Psoas muscle (tissue), 8 donors: ENCODE measurements at regions of chr20 and their contacts with region 1.

Region 1: GRCh38 chr20:17995967-17996819 is 27.4 kb downstream of the MGME1 start:
- DNase-seq: no peak
- ATAC-seq: peak; percentile 70 to 88 (median 75)
- H3K4me3 ChIP-seq: no peak overlapping the region
- H3K27ac ChIP-seq: no peak overlapping the region
- H3K4me1 ChIP-seq: no peaks in the 10 kb centered on the region
- H3K27me3 ChIP-seq: no peaks in the 10 kb centered on the region
- CTCF ChIP-seq: peak; percentile 96

Region 2: DNA sequence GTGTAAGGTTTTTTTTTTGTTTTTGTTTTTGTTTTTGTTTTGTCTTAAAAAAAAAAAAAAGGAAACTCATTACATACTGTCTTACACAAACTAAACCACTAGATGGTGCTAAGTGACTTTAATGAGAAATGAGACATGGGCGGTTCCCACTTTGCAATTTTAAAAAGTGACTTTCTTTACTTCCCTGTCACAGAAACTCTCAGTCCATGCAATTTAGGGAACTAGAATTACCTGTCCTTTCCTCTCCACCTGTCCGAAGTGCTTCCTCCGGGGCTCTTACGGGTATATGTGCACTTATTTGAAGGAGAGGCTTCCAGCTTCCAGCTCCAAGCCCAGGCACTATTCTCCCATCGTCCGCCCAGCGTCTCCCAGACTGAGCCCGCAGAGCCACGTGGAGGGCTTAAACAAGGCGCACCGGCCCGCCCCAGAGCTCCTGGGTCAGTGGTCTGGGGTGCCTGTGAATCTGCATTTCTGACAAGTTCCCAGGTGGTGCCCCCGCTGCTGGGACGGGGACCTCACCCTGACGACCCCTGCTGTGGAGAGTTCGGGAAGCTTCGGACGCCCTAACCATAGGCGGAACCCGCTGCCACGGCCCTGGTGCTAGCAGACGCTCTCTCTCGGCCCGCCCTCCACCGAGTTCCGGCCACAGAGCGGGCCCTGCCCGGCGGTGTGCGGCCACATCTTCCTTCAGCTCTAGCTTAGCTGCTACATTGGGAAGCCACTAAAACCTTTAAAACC is 491.1 kb before region 1 on chr20:
- intact Hi-C with region 1: loop called (anchors 2 to 10 kb)
- DNase-seq: peak; percentile 49 to 68
- ATAC-seq: peak; percentile 68 to 89 (median 74)
- H3K4me3 ChIP-seq: peak overlapping the region; percentile 63
- H3K27ac ChIP-seq: no peak overlapping the region
- H3K4me1 ChIP-seq: no peaks in the 10 kb centered on the region
- H3K27me3 ChIP-seq: no peaks in the 10 kb centered on the region
- CTCF ChIP-seq: peak; percentile 74

Region 3: DNA sequence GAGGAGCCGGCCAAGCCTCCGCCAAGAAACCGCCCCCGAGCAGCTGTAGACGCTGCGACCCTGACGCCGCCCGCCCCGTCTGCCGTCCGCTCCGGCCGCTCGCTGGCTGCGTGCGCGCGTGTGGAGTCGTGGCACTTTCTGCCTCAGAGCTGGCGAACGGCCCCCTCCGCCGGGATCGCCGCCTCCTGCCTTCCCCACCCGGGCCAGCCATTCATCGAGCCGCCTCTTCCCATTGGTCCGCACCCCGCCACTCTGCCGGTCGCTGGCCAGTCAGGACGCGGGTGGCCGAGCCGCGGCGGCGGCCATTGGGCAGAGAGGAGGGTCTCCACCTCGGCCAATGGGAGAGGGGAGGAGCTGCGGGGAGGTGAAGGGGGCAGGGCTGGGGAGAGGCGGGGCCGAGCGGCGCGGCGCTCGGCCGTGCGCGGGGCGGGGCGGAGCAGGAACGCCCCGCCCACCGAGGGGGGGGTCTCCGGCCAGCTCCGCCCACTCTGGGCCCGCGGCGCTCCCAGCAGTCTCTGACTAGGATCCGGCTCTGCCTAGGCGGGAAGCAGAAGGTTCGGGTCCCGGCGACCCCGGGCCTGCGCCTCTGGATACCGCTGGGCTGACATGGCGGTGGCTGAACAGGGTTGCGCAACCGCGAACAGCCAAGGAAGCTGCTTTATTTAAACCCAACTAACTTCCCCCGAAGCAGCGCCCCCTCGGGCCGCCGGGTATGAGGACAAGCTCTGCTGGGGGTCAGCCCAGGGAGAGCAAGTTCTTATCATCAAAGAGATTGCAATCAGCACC is 313.9 kb before region 1 on chr20 and contains the start of gene RRBP1:
- intact Hi-C with region 1: loop called (anchors 2 to 5 kb)
- DNase-seq: peak; percentile 99
- ATAC-seq: peak; percentile 95 to 96 (median 96)
- H3K4me3 ChIP-seq: peak within 1 kb of the TSS; percentile 75
- H3K27ac ChIP-seq: peak within 1 kb of the TSS; percentile 81
- H3K4me1 ChIP-seq: peaks cover 11% of the 10 kb centered on the region
- H3K27me3 ChIP-seq: no peaks in the 10 kb centered on the region
- CTCF ChIP-seq: peak; percentile 62
- total RNA-seq, gene RRBP1: 21.1 to 40.8 (median 22.6) TPM

Region 4: DNA sequence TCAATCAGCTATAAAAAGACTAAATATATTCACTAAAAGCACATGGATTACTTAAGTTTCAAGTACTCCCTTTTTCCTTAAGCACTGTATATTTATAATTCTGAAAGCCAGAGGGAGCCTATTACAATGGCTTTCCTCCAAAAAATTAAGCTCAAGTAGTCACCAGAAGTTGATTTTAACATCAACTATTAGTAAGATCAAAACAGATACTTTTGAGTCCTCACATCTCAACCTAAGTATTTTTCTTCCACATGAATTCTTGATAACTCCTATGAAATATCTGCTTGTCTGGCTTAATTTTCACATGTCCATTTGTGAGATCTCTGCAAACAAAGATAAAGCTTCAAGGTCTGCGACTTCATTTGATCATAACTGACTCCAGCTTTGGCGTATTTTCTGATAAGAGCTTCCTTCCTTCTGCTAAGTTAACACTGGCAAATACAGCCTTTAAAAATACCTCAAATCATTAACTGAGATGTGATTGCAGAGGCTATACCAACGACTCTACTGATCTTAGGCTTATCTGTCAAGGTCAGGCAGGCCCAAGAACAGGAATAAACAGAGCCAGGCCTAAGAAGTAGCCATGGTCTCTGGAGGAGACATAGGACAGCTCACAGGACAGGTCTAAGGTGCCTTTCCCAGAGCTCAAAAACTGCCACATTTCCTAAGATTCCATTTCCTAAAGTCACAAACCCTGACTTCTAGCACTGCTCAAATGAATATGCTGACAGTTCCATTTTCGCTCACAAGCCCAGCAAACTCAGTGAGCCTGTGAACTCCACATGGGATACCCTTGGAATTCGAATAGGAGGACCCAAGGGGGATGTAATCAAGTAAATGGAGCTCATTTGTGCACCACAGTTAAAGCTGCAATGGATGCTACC is 37.6 kb before region 1 on chr20:
- intact Hi-C with region 1: loop called (anchors 2 to 5 kb)
- DNase-seq: no peak
- ATAC-seq: no peak
- H3K4me3 ChIP-seq: no peak overlapping the region
- H3K27ac ChIP-seq: peak overlapping the region; percentile 52
- H3K4me1 ChIP-seq: peaks cover 45% of the 10 kb centered on the region
- H3K27me3 ChIP-seq: no peaks in the 10 kb centered on the region
- CTCF ChIP-seq: peak; percentile 25

Region 5: DNA sequence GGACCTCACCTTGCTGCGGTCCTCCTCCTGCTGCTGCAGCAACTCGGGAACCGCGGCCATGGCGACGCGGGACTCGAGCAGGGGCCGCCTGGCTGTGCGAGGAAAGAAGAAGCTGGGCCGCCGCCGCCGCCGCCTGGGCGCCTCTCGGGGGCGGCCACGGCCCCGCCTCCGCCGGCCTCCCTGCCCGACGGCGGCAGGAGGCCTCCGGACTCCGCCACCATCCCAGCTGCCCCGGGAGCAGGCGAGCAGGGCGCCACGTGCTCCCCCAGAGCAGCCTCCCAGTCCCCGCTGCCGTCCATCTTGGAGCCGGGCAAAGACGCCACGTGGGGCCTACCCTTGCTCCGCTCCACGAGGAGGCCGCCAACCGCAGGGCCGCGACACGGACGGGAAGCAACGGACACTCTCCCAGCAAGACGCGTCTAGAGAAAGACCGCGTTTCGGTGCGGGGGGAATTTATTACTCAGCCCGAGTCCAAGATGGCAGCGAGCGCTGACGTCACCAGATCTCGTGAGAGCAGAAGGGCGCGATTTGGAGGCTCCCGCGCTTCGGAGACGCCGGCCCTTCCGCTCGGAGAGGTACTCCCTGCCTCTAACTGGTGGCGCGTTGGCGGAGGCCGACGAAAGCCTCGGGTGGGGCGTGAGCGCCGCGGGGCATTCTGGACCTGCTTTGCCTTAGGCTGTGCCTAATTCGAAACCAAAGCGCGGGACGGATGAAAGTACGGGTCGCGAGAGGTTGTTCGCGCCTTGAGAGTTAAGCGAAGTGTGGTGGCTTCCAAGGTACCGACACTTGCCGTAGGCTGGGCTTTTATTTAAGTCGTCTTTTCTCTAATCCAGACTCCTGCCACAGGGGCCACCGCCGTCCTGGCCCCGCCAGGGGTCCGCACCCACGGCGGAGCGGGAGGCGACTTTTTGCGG is 27.6 kb before region 1 on chr20 and contains the starts of genes MGME1 and SNX5:
- intact Hi-C with region 1: loop called in 1 of 2 experiments (anchors 2 kb)
- DNase-seq: peak; percentile 99 to 100
- ATAC-seq: peak; percentile 92 to 96 (median 92)
- H3K4me3 ChIP-seq: peak within 1 kb of the TSS; percentile 97
- H3K27ac ChIP-seq: peak within 1 kb of the TSS; percentile 98
- H3K4me1 ChIP-seq: peaks cover 54% of the 10 kb centered on the region
- H3K27me3 ChIP-seq: no peaks in the 10 kb centered on the region
- CTCF ChIP-seq: no peak
- total RNA-seq, gene MGME1: 8.6 to 21.8 (median 12.2) TPM
- total RNA-seq, gene SNX5: 59.8 to 81.3 (median 69.7) TPM